ENCODE measurements at regions of chr15 and their contacts with region 1.

Region 1: DNA sequence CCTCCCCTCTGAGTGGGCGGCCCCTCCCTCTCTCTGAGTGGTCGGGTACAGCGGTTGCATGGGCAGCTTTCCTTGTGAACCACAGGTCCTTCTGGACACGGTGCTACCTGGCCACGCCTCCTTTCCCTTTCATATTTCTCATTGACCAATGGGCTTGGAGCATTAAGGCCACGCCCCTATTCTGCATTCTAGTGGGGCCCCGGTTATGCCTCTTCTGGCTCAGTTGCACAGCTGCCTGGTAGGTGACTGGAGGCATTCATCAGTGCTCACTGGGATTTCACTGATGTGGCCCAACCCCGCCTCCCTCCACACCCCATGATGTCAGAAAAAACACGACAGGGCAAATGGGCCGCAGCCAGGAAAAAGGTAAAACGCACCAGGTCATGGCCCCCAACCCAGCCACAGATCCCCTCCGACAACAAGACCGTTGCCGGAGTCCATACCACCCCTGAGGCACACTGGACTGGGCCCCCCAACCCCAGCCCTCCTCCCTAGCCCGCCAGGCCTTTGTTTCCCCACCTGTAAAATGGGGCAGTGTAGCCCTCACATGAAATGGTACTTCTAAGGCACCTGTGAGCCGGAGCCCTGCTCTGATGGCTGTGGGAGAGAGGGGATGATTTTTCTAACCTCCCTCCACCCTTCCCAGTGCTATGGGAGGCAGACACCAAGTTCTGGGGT is 26.3 kb downstream of the NGRN start:
- DNase-seq: peak; percentile 21
- H3K4me3 ChIP-seq: no peak overlapping the region
- H3K27ac ChIP-seq: no peak overlapping the region
- H3K4me1 ChIP-seq: no peaks in the 10 kb centered on the region
- H3K27me3 ChIP-seq: no peaks in the 10 kb centered on the region
- CTCF ChIP-seq: no peak

Region 2: DNA sequence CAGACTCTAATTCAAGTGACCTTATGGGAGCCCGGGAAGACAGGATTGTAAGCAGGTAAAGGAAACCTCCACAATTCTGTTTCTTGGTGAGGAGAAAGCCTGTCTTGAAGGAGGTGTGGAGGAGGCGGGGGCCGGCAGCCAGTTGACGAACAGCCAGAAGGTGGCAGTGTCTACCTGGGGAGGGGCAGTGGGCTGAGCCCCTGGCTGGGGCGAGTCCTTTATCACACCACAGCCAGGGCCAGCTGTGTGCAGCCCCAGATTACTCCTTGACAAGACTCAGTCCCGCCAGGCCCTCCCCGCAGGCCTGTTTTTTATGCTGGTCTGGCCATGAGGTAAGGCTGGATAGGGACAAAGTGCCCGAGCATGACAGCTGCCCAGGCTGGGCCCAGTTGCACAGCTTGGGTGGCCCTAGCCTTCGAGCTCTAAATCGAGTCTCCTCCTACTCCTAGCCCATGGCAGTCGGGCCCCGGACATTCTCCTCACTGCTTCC is 148.6 kb before region 1 on chr15:
- CTCF ChIA-PET with region 1: no interaction called
- dilution Hi-C with region 1: no loop called
- in situ Hi-C with region 1: no loop called
- intact Hi-C with region 1: loop called (anchors 1 kb)
- DNase-seq: peak; percentile 48
- H3K4me3 ChIP-seq: no peak overlapping the region
- H3K27ac ChIP-seq: no peak overlapping the region
- H3K4me1 ChIP-seq: peaks cover 10% of the 10 kb centered on the region
- H3K27me3 ChIP-seq: no peaks in the 10 kb centered on the region
- CTCF ChIP-seq: peak; percentile 56 to 78

Region 3: DNA sequence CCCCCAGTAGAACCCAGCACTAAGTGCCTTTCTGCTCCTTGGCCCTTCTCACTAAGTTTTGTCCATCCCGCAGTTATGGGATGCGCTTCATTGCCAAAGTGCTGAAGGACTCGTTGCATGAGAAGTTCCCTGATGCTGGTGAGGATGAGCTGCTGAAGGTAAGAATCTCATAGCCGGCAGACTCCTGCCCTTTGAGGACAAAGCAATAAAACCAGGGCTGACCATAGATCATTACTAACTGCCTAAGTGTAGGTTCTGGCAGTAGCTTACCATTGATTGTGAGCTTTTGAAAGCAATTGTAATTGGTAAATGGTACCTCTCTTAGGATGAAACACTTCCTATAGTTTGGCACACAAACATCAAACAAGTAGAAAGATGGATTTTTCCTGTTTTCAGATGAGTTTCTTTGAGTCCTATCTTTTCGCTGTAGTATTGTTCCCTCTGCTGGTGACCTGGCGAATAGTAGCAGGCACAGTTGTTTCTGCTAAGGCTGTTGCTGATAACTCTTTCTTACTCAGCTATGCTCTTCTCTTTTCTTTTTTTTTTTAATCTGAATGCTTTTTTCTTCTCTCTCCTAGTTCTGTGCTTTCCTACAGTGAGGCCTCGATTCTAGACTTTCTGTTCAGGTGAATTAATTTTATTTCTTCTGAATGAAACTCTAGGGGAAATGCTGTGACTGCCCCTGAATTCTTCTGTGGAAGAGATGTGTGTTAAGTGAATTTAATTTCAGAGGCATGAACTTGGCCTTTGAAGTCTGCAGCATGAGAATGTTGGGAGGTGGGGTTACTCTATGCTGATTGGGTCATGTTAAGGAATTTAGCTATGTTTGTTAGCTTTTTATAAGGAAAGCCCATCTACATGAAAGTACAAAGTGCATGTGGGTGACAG is 190.6 kb after region 1 on chr15:
- CTCF ChIA-PET with region 1: no interaction called
- dilution Hi-C with region 1: no loop called
- in situ Hi-C with region 1: no loop called
- intact Hi-C with region 1: loop called (anchors 1 kb)
- DNase-seq: no peak
- H3K4me3 ChIP-seq: no peak overlapping the region
- H3K27ac ChIP-seq: no peak overlapping the region
- H3K4me1 ChIP-seq: peaks cover 29% of the 10 kb centered on the region
- H3K27me3 ChIP-seq: no peaks in the 10 kb centered on the region
- CTCF ChIP-seq: peak; percentile 65 to 71

Region 4: GRCh38 chr15:90642464-90643300 is 350.9 kb after region 1 on chr15:
- CTCF ChIA-PET with region 1: interaction called, 3 read pairs
- dilution Hi-C with region 1: no loop called
- in situ Hi-C with region 1: no loop called
- intact Hi-C with region 1: loop called (anchors 5 kb)
- DNase-seq: peak; percentile 79
- H3K4me3 ChIP-seq: no peak overlapping the region
- H3K27ac ChIP-seq: peak overlapping the region; percentile 3
- H3K4me1 ChIP-seq: peaks cover 16% of the 10 kb centered on the region
- H3K27me3 ChIP-seq: no peaks in the 10 kb centered on the region
- CTCF ChIP-seq: peak in 1 of 2 donors; percentile 45

Region 5: GRCh38 chr15:90886041-90886614 is 594.3 kb after region 1 on chr15:
- CTCF ChIA-PET with region 1: no interaction called
- dilution Hi-C with region 1: no loop called
- in situ Hi-C with region 1: no loop called
- intact Hi-C with region 1: loop called (anchors 1 kb)
- DNase-seq: no peak
- H3K4me3 ChIP-seq: no peak overlapping the region
- H3K27ac ChIP-seq: no peak overlapping the region
- H3K4me1 ChIP-seq: no peaks in the 10 kb centered on the region
- H3K27me3 ChIP-seq: no peaks in the 10 kb centered on the region
- CTCF ChIP-seq: peak; percentile 93 to 99